Caco-2 (cell line): ENCODE measurements at regions of chr6 and their contacts with region 1.

Region 1: DNA sequence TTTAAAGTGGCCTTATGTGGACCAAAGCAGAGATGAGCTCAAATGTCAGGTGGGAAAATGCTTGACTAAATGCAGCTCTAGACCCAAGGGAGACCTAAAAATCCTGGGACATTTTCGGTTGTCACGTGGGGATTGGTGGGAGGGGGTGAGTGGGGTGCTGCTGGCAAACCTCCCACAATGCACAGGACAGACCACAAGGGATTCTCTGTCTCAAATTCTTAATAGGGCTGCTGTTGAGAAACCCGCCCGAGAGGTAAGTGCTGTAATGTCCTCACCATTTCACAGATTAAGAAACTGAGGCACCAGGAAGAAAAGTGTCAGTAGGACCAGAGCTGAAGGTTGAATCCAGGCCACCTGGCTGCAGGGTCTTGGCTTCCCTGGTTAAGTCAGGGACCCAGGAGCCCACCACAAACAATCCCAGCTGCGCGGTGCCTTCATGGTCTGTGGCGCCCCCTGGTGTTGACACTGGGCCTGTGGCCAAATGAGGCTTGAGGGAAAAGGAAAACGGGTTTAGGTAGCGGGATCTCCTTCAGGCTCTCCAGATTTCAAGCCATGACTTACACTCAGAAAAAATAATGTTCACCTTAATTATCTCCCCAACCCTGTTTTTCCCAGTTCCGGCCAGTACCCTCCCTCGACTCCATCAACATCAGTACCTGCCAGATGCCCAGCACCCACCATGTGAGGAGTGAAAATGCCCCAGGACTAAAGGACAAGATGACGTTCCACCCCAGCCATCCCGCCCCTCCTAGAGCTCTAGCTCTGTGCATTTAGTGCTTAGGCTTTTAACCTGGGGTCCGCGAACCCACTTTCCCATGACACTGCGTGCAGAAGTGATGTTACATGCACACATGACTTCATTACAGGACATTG is 7.2 kb downstream of the HLA-G start:
- DNase-seq: peak in 1 of 2 experiments; percentile 47
- H3K4me3 ChIP-seq: no peak overlapping the region
- H3K4me3 Mint-ChIP-seq: no peak overlapping the region
- H3K27ac Mint-ChIP-seq: no peak overlapping the region
- H3K4me1 ChIP-seq: no peaks in the 10 kb centered on the region
- H3K4me1 Mint-ChIP-seq: peaks cover 10% of the 10 kb centered on the region
- H3K27me3 ChIP-seq: no peaks in the 10 kb centered on the region
- H3K27me3 Mint-ChIP-seq: peaks cover 19% of the 10 kb centered on the region
- CTCF ChIP-seq: peak; percentile 73 to 84

Region 2: DNA sequence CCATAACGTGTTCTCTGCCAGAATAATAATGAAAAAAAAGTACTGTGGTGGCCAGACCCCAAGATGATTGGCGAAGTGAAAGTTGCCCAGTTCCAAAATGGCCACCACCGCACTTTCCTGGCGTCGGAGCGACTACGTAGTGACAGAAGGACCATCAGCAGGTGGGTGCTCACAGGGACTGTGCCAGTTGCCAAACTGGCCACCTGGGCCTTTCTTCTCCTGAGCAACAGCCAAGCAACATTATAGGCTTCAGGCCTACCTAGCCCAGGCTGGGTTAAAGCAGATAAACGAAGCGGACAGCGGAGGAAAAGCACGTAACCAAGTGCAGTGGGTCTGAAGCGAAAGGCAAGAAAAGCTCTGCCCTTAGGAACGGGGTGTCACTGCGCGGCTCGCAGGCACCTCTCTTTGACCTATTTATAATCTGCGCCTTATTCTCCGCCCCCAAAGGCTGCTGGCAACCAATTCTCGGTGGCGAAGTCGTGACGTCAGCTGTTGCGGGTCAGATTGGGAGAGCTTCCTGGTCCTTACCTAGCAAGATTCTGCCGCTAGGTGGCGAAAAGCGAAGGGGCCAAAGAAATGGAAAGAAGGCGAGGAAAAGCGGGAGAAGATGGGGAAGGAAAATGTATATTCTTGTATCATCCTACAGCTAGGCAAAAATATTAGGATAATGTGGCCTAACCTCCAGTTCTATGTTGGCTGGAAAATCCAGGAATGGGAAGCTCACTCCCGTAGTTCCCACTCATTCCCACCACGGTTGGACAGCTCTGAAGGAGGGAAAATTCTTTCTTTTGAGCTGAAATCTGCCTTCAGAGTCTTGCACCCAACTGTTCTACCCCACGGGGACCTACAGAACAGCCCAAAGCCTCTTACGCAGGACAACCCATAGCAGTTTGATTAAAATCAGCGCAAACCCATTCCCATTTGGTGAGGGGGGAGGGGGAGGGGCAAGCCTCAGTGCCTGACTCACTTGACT is 184.8 kb before region 1 on chr6:
- CTCF ChIA-PET with region 1: interaction called, 5 read pairs
- POLR2A ChIA-PET with region 1: no interaction called
- intact Hi-C with region 1: loop called (anchors 2 kb)
- DNase-seq: peak; percentile 95 to 96
- H3K4me3 ChIP-seq: peak overlapping the region; percentile 41
- H3K4me3 Mint-ChIP-seq: peak overlapping the region; percentile 76
- H3K27ac Mint-ChIP-seq: peak overlapping the region; percentile 63
- H3K4me1 ChIP-seq: 0 out of 2 replicates have a peak, but pooled peaks cover 3% of the 10 kb centered on the region
- H3K4me1 Mint-ChIP-seq: peaks cover 7% of the 10 kb centered on the region
- H3K27me3 ChIP-seq: no peaks in the 10 kb centered on the region
- H3K27me3 Mint-ChIP-seq: no peaks in the 10 kb centered on the region
- CTCF ChIP-seq: peak; percentile 69 to 91

Region 3: DNA sequence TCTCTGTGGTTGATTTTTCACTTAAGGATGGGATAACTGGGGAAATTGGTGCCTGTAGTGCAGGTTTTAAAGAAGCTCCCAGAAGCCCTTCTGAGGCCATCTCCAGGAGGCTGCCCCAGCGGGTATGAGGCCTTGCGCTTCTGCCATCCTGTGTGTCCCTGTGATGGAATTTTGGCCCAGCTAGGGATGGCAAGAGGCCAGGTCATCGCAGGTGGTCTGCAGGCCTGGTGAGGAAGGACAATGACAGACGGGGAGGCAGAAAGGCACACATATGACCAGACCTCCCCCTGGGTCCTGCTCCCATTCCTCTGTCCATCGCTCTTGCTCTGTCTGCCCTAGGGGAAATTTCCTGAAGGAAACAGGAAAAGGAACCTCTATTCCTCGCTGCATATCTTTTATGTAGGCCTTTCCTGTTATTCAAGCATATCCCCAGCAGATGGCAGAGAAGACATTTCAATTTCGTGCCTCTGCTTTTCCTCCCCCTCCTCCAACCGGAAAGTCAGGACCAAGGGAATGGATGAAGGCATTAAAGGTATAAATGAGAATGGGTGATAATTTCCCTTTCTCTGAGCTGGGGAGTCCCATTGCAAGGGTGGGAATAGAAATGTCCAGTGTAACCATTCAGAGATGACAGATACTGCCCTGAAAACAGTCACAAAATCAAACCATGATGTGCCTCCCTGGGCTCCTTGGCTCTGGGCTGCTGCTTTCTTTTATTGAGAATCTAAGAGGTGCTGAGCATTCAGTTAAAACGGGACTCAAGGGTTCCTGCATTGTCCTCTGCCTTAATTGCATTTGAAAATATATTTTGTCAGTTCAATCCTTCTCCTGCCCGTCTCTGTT is 129.2 kb before region 1 on chr6:
- CTCF ChIA-PET with region 1: no interaction called
- POLR2A ChIA-PET with region 1: no interaction called
- intact Hi-C with region 1: loop called (anchors 1 kb)
- DNase-seq: peak in 1 of 2 experiments; percentile 58
- H3K4me3 ChIP-seq: no peak overlapping the region
- H3K4me3 Mint-ChIP-seq: no peak overlapping the region
- H3K27ac Mint-ChIP-seq: no peak overlapping the region
- H3K4me1 ChIP-seq: no peaks in the 10 kb centered on the region
- H3K4me1 Mint-ChIP-seq: no peaks in the 10 kb centered on the region
- H3K27me3 ChIP-seq: no peaks in the 10 kb centered on the region
- H3K27me3 Mint-ChIP-seq: peaks cover 13% of the 10 kb centered on the region
- CTCF ChIP-seq: peak; percentile 62 to 63

Region 4: DNA sequence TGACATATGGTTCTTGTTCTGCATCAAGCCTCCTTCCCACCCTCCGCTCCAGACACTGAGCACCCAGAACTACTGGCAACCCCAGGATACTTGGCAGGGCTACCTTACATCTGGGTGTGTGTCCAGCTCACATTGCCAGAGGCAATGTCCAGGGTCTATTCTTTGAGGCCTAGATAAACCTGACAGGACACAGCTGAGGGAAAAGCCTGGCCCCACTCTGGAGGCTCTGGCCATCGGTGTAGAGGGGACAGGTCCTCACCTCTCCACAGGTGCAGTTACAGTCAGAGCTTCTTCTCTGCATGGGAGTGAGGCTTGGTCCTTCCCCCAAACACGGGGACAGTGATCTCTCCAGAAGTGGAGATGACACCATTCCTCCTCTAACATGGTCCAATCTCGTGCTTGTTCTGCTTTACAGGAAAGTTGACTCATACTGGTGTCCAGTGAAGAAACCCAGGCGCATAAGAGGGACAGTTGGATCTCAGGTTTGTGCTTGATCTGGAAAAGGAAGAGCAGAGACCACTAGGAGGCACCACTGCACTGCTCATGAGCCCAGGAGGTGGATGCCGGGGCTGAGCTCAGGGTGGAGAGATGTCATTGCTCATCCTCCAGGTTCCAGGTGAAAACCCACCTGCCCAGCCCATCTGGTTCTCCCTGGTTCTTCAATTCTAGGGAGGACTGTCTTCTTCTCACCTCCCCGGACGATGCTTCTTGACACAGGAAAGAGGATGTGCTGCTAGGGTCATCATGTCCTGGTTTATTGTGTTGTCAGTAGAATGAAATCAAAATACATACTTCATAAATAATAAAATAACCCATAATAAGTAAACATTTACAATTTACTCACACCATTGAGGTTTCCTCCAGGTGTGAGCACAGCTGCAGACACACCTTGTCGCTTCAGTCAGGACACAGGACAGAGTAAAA is 96.8 kb before region 1 on chr6:
- CTCF ChIA-PET with region 1: interaction called, 17 read pairs
- POLR2A ChIA-PET with region 1: no interaction called
- intact Hi-C with region 1: loop called (anchors 1 kb)
- DNase-seq: peak; percentile 66 to 72
- H3K4me3 ChIP-seq: no peak overlapping the region
- H3K4me3 Mint-ChIP-seq: no peak overlapping the region
- H3K27ac Mint-ChIP-seq: no peak overlapping the region
- H3K4me1 ChIP-seq: no peaks in the 10 kb centered on the region
- H3K4me1 Mint-ChIP-seq: no peaks in the 10 kb centered on the region
- H3K27me3 ChIP-seq: no peaks in the 10 kb centered on the region
- H3K27me3 Mint-ChIP-seq: peaks cover 3% of the 10 kb centered on the region
- CTCF ChIP-seq: peak; percentile 75 to 81

Region 5: DNA sequence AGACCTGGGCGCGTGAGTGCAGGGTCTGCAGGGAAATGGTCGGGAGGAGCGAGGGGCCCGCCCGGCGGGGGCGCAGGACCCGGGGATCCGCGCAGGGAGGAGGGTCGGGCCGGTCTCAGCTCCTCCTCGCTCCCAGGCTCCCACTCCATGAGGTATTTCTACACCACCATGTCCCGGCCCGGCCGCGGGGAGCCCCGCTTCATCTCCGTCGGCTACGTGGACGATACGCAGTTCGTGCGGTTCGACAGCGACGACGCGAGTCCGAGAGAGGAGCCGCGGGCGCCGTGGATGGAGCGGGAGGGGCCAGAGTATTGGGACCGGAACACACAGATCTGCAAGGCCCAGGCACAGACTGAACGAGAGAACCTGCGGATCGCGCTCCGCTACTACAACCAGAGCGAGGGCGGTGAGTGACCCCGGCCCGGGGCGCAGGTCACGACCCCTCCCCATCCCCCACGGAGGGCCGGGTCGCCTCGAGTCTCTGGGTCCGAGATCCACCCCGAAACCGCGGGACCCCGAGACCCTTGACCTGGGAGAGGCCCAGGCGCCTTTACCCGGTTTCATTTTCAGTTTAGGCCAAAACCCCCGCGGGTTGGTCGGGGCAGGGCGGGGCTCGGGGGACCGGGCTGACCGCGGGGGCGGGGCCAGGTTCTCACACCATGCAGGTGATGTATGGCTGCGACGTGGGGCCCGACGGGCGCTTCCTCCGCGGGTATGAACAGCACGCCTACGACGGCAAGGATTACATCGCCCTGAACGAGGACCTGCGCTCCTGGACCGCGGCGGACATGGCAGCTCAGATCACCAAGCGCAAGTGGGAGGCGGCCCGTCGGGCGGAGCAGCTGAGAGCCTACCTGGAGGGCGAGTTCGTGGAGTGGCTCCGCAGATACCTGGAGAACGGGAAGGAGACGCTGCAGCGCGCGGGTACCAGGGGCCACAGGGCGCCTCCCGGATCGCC is 53.3 kb after region 1 on chr6:
- CTCF ChIA-PET with region 1: no interaction called
- POLR2A ChIA-PET with region 1: no interaction called
- intact Hi-C with region 1: no loop called
- DNase-seq: peak; percentile 68 to 77
- H3K4me3 ChIP-seq: peak overlapping the region; percentile 66
- H3K4me3 Mint-ChIP-seq: peak overlapping the region; percentile 72
- H3K27ac Mint-ChIP-seq: peak overlapping the region; percentile 84
- H3K4me1 ChIP-seq: no peaks in the 10 kb centered on the region; the same call in 1 of the 2 replicates
- H3K4me1 Mint-ChIP-seq: peaks cover 7% of the 10 kb centered on the region
- H3K27me3 ChIP-seq: no peaks in the 10 kb centered on the region
- H3K27me3 Mint-ChIP-seq: no peaks in the 10 kb centered on the region
- CTCF ChIP-seq: no peak